Endothelial cell of umbilical vein (primary cell): ENCODE measurements at regions of chr1 and their contacts with region 1.

Region 1: DNA sequence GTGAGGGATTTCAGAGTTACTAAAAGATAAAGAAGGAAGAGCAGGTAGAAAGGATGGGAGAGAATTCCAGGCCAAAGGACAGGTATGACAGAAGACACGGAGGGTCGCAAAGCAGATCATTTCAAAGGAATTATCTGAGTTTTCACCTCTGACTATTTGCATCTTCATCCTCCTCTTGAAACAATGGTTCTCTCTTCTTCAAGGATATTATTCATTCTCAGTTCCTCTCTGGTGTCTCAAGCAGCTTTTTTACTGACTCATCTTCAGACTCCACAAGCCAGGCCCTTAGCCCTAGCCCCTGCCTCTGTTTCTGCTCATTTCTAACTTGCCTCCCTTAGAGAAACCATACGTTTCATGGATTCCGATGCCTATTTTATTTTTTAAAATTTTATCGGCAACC is 15.0 kb downstream of the DDX59 start:
- DNase-seq: no peak
- H3K4me3 ChIP-seq: no peak overlapping the region
- H3K27ac ChIP-seq: no peak overlapping the region
- H3K4me1 ChIP-seq: no peaks in the 10 kb centered on the region
- H3K27me3 ChIP-seq: no peaks in the 10 kb centered on the region
- CTCF ChIP-seq: no peak
- POLR2A ChIP-seq: no peak

Region 2: GRCh38 chr1:200699871-200700270 is 45.2 kb after region 1 on chr1:
- CTCF ChIA-PET with region 1: no interaction called
- POLR2A ChIA-PET with region 1: interaction called, 10 read pairs
- dilution Hi-C with region 1: no loop called
- intact Hi-C with region 1: no loop called
- DNase-seq: no peak
- H3K4me3 ChIP-seq: no peak overlapping the region
- H3K27ac ChIP-seq: no peak overlapping the region
- H3K4me1 ChIP-seq: peaks cover 5% of the 10 kb centered on the region
- H3K27me3 ChIP-seq: no peaks in the 10 kb centered on the region
- CTCF ChIP-seq: no peak
- POLR2A ChIP-seq: no peak